H1 (cell line): ENCODE measurements at regions of chr7 and their contacts with region 1.

Region 1: GRCh38 chr7:145884716-145885514 is 231.7 kb upstream of the CNTNAP2 start:
- DNase-seq: no peak
- H3K4me3 ChIP-seq: no peak overlapping the region
- H3K27ac ChIP-seq: no peak overlapping the region
- H3K4me1 ChIP-seq: no peaks in the 10 kb centered on the region
- H3K27me3 ChIP-seq: no peaks in the 10 kb centered on the region
- CTCF ChIP-seq: no peak
- EP300 ChIP-seq: no peak
- POLR2A ChIP-seq: no peak
- RAD21 ChIP-seq: peak; percentile 35 to 44; a peak in 2 of 4 replicates

Region 2: DNA sequence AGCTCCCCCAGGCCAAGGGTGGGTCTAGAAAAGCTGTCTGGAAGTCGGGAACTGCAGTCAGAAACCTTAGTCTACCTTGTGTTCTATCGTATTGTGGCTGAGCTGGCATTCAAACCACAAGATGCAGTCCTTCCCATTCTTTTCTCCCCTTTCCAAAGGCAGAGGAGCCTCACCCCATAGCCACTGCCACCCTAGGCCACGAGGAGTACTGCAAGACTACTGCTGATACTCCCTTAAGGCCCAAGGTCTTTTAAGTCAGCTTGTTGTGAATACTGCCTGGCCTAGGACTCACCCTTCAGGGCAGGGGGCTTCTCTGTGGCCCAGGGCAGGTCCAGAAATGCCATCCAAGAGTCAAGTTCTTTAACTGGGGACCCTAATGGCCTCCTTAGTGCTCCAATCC is 17.2 kb after region 1 on chr7:
- CTCF ChIA-PET with region 1: interaction called, 10 read pairs
- POLR2A ChIA-PET with region 1: no interaction called
- DNase-seq: peak in 1 of 2 experiments; percentile 50
- H3K4me3 ChIP-seq: no peak overlapping the region
- H3K27ac ChIP-seq: no peak overlapping the region
- H3K4me1 ChIP-seq: peaks cover 0 to 5% (median under 1%) of the 10 kb centered on the region in 4 experiments; a peak in 5 of 7 replicates
- H3K27me3 ChIP-seq: no peaks in the 10 kb centered on the region
- CTCF ChIP-seq: peak; percentile 30 to 73 (median 41); a peak in 3 of 4 replicates
- EP300 ChIP-seq: no peak
- POLR2A ChIP-seq: no peak
- RAD21 ChIP-seq: peak; percentile 32 to 45

Region 3: GRCh38 chr7:145928937-145929336 is 44.0 kb after region 1 on chr7:
- CTCF ChIA-PET with region 1: no interaction called
- POLR2A ChIA-PET with region 1: no interaction called
- DNase-seq: no peak
- H3K4me3 ChIP-seq: no peak overlapping the region
- H3K27ac ChIP-seq: no peak overlapping the region
- H3K4me1 ChIP-seq: no peaks in the 10 kb centered on the region; a peak in 1 of 7 replicates
- H3K27me3 ChIP-seq: no peaks in the 10 kb centered on the region
- CTCF ChIP-seq: no peak
- EP300 ChIP-seq: no peak
- POLR2A ChIP-seq: no peak
- RAD21 ChIP-seq: no peak